ENCODE measurements at regions of chr19 and their contacts with region 1.

Region 1: DNA sequence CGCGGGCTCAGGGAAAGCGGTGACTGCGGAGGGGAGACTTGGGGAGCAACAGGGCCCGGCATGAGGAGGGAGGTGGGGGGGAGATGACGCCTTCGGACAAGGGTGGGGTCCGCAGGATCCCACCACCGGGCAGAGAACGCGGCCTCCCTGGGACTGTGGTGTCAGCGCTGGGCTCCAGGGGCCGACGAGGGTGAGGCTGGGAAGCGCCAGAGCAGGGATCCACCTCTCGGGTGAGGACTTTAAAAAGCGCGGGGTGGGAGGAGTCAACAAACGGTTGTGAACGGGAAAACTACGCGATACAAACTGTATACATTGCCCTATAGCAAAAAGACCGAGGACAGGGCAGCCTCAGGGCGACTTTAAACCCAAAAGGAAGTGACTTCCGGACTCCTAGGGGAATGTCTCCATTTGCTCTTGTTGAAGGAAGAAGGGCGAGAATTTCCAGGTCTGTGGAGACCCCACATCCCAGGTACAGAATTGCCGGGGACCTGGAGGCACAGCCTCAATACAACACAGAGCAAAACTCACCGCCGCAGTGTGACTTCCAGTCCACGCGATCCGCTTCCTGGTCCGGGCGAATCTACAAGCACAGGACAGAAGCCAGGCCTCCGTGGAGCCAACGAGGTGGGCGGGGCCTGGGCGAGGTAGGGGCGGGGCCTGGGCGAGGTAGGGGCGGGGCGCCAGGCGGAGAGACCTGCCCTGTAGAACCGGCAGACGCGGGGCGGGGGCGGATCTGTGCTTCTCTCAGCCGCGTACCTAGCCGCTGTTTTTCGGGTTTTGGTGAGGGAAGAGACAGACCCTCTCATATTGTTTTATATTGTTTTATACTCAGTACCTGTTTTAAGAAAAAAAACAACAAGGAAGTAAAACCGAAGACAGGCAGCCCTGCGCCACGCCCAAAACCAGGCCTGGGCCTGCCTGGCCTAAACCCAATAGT is at the start of gene ZNF888:
- DNase-seq: peak; percentile 95
- H3K4me3 Mint-ChIP-seq: peak within 1 kb of the TSS; percentile 89
- H3K27ac Mint-ChIP-seq: peak within 1 kb of the TSS; percentile 96
- H3K4me1 Mint-ChIP-seq: peaks cover 19% of the 10 kb centered on the region
- H3K27me3 Mint-ChIP-seq: no peaks in the 10 kb centered on the region
- total RNA-seq, gene ZNF888: 4.4 and 6.5 TPM in 2 replicates

Region 2: DNA sequence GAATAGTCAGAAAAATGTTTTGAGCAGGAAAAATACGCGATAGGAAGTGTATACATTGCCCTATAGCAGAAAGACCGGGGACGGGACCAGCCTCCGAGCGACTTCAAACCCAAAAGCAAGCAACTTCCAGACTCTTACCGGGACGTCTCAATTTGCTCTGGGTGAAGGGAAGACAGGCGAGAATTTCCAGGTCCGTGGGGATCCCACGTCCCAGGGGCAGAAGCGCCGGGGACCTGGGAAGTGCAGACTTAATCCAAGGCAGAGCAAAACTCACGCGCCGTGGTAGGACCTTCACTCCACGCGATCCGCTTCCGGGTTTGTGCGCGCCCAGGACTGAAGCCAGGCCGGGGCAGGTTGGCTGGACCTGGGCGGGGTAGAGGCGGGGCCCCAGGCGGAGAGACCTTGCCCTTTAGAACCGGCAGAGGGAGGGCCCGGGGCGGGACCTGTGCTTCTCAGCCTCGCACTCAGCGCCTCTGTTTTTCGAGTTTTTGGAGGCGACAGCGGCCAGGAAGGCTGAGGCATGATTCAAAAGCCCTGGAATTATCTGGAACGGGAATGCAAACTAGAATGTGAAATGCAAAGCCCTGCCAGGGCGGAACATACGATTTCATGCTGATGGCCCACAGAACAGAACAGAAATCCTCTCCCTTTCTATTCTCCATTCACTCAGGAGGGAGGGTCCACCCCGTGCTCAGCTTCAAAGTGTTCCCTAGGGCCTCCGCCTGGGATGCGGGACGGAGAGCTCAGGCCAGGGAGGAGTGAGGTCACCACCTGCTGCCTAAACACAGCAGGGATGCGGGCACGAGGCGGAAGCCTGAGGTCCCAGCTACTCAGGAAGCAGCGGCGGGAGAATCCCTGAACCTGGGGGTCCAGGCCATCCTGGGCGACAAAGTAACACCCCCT is 136.4 kb before region 1 on chr19 and contains the start of gene ZNF600:
- intact Hi-C with region 1: loop called (anchors 10 kb)
- DNase-seq: peak; percentile 90
- H3K4me3 Mint-ChIP-seq: peak within 1 kb of the TSS; percentile 92
- H3K27ac Mint-ChIP-seq: peak within 1 kb of the TSS; percentile 79
- H3K4me1 Mint-ChIP-seq: peaks cover 26% of the 10 kb centered on the region
- H3K27me3 Mint-ChIP-seq: no peaks in the 10 kb centered on the region
- total RNA-seq, gene ZNF600: 10.6 and 10.7 TPM in 2 replicates

Region 3: GRCh38 chr19:52853880-52854279 is 69.2 kb before region 1 on chr19:
- intact Hi-C with region 1: loop called (anchors 2 kb)
- DNase-seq: no peak
- H3K4me3 Mint-ChIP-seq: no peak overlapping the region
- H3K27ac Mint-ChIP-seq: no peak overlapping the region
- H3K4me1 Mint-ChIP-seq: peaks cover 16% of the 10 kb centered on the region
- H3K27me3 Mint-ChIP-seq: no peaks in the 10 kb centered on the region

Region 4: DNA sequence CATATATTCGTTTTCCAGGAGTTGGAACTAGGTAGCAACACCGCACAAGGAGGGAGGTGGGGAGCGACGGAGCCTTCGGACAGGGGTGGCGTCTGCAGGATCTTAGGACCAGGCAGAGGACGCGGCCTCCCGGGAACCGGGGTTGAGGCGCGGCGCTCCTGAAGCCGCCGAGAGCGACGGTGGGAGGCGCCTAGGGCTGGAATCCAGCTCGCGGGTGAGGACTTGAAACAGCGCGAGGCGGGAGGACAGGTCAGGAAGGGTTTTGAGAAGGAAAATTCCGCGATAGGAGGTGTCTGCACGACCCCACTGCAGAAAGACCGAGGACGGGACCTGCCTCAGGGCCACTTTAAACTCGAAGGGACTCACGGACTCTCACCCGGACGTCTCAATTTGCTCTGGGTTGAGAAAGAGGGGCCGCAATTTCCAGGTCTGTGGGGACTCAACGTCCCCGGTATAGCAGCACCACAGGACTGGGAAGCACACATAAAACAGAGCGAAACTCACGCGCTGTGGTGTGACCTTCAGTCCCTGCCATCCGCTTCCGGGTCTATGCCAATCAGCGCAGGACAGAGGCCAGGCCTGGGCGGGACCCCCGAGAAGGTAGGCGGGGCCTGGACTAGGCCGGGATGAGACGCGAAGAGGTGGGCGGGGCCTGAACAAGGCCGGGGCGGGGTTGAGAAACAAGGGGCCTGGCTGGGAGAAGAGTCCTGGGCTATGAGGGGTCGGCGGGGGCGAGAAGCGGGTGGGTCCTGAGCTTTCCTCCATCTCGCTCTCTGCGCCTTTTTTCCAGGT is 25.8 kb before region 1 on chr19 and contains the start of gene ZNF320:
- intact Hi-C with region 1: loop called (anchors 2 kb)
- DNase-seq: peak; percentile 98
- H3K4me3 Mint-ChIP-seq: peak within 1 kb of the TSS; percentile 92
- H3K27ac Mint-ChIP-seq: peak within 1 kb of the TSS; percentile 93
- H3K4me1 Mint-ChIP-seq: peaks cover 7% of the 10 kb centered on the region
- H3K27me3 Mint-ChIP-seq: no peaks in the 10 kb centered on the region
- total RNA-seq, gene ZNF320: 8.0 and 17.8 TPM in 2 replicates

Region 5: GRCh38 chr19:52910648-52911047 is 12.5 kb before region 1 on chr19:
- intact Hi-C with region 1: no loop called
- DNase-seq: no peak
- H3K4me3 Mint-ChIP-seq: no peak overlapping the region
- H3K27ac Mint-ChIP-seq: no peak overlapping the region
- H3K4me1 Mint-ChIP-seq: no peaks in the 10 kb centered on the region
- H3K27me3 Mint-ChIP-seq: no peaks in the 10 kb centered on the region

Region 6: GRCh38 chr19:52942386-52943133 is 19.5 kb after region 1 on chr19:
- intact Hi-C with region 1: loop called (anchors 2 kb)
- DNase-seq: peak; percentile 99
- H3K4me3 Mint-ChIP-seq: peak overlapping the region; percentile 90
- H3K27ac Mint-ChIP-seq: peak overlapping the region; percentile 88
- H3K4me1 Mint-ChIP-seq: peaks cover 19% of the 10 kb centered on the region
- H3K27me3 Mint-ChIP-seq: no peaks in the 10 kb centered on the region

Region 7: DNA sequence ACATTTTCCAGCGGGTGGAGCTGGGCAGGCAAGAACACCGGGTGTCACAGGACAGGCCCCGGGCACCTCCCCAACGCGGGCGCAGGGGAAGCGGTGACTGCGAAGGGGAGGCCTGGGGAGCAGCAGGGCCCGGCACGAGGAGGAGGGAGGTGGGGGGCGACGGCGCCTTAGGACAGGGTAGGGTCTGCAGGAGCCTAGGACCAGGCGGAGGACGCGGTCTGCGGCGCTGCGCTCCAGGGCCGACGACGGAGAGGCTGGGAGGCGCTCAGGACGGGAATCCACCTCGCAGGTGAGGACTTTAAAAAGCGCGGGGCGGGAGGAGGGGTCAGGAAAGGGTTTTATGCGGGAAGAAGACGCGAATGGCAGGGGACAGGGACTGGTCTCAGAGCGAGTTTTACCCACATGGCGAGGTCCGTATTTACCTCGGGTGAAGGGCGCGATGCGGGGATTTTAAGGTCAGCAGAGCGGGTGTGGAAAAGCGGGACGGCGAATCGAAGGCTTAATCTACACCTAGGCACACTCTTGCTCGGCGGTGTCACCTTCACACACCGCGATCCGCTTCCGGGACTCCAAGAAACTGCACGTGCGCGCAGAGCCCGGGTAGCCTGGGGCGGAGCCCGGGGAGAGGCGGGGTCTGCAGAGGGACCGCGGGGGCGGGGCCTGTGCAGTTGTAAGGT is 134.9 kb after region 1 on chr19:
- intact Hi-C with region 1: no loop called
- DNase-seq: peak; percentile 58
- H3K4me3 Mint-ChIP-seq: peak overlapping the region; percentile 20
- H3K27ac Mint-ChIP-seq: no peak overlapping the region
- H3K4me1 Mint-ChIP-seq: no peaks in the 10 kb centered on the region
- H3K27me3 Mint-ChIP-seq: no peaks in the 10 kb centered on the region